WTC11 (cell line): ENCODE measurements at regions of chr17 and their contacts with region 1.

Region 1: DNA sequence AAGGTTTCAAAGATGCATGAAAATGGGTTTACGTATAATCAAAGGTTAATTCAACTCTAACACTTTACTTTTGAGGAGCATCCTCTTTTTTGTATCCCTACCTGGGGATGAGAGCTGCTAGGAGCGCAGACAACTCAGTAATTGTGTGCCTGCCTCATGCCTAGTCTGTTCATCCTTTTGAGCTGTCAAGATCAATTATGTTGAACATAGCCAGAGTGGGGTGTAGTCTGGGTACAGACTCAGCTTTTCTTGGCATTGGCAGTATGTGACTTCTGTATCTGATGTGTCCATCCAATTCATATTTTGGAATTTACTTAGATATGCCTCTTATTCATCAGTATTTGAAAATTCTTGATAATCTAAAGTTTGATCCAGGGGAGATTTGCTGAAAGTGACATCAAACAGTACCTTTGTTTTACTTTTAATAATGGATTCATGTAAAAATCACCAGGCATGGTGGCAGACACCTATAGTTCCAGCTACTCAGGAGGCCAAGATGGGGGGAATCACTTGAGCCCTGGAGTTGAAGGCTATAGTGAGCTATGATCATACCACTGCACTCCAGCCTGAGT is 24.1 kb downstream of the PRKCA start:
- DNase-seq: no peak
- ATAC-seq: no peak
- H3K4me3 Mint-ChIP-seq: no peak overlapping the region
- H3K27ac Mint-ChIP-seq: no peak overlapping the region
- H3K4me1 Mint-ChIP-seq: no peaks in the 10 kb centered on the region
- H3K27me3 Mint-ChIP-seq: no peaks in the 10 kb centered on the region
- CTCF ChIP-seq: no peak

Region 2: DNA sequence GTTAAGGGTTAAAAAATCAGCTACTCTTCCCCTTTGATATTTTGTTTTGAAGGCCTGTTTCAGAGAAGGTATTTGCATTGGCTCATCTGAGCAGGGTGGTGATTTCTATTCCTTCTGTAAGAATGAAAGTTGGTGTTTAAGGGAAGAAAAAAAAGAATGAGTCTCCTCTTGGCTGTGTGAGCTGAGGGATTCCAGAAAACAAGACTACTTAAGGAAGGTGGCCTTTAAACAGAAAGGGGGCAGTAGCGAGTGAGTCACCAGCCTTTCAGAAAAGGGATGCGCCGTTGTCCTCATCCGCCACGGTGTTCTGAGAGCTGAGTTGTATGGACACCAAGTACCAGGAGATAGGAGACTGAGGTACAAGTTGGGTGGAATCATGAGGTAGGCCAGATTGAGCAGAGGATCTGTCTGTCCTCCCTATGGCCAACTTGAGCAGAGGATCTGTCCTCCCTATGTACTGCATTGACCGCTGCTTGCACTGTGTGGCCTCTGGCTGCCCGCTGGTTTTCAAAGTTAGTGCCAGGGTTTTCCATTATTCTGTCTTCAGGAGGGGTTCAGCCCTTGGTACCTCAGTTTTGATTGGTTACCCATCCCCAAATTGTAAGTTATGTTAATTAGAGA is 15.9 kb before region 1 on chr17:
- CTCF ChIA-PET with region 1: interaction called, 10 read pairs
- POLR2A ChIA-PET with region 1: interaction called, 5 read pairs
- DNase-seq: peak; percentile 44
- ATAC-seq: peak; percentile 91
- H3K4me3 Mint-ChIP-seq: no peak overlapping the region
- H3K27ac Mint-ChIP-seq: no peak overlapping the region
- H3K4me1 Mint-ChIP-seq: peaks cover 35% of the 10 kb centered on the region
- H3K27me3 Mint-ChIP-seq: no peaks in the 10 kb centered on the region
- CTCF ChIP-seq: peak; percentile 54; the same call in 1 of the 2 replicates